Activated naive CD4-positive, alpha-beta T cell treated with anti-CD3 and anti-CD28 coated beads for 36 hours (primary cell): ENCODE measurements at regions of chr11 and their contacts with region 1.

Region 1: GRCh38 chr11:111766093-111766833 is at the start of gene PPP2R1B:
- DNase-seq: peak; percentile 78
- H3K4me3 Mint-ChIP-seq: peak within 1 kb of the TSS; percentile 100
- H3K27ac Mint-ChIP-seq: peak within 1 kb of the TSS; percentile 96
- H3K4me1 Mint-ChIP-seq: peaks cover 33% of the 10 kb centered on the region
- H3K27me3 Mint-ChIP-seq: no peaks in the 10 kb centered on the region
- total RNA-seq, gene PPP2R1B: 36.7 to 43.8 TPM

Region 2: DNA sequence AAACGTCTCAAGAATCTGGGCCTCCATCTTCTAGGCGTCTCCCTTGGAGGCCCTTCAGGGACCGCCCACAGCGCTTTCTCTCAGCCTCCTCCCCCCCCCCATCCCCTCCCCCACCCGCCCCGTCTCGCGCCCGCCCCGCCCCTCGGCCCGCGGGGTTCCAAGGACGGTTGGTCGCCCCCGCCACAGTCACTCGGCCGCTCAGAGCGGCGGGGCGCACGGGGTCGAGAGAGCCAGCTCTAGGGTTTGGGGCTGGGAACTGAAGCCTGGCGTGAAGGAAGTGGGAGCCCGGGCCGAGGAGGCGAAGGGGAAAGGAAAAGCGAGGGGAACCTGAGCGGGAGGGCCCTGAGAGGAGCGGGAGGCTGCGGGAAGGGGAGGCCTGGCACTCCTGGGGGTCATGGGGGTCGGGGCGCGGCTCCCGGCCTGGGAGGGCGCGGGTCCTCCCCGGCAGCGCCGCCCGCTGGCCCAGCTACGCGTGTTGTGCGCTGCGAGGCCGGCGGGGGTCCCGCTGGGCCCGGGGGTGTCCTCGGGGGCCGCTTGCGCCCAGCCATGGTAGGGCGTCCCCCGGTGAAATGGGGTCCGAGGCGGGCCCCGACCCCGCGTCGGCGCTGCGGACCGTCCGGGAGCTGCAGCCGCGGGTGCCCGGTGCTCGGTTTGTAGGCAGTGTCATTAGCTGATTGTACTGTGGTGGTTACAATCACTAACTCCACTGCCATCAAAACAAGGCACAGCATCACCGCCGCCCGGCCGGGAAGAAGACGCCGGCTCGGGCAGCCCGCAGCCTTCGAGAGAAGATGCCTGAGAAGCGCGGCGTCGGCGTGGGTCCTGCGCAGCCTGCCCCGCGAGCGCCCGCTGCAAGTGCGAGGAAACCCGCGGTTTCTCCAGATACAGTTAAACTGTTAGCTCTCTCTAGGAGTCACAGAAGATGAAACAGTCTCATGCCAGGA is 253.7 kb before region 1 on chr11 and contains the start of gene BTG4:
- CTCF ChIA-PET with region 1: no interaction called
- intact Hi-C with region 1: no loop called
- DNase-seq: peak; percentile 48
- H3K4me3 Mint-ChIP-seq: peak within 1 kb of the TSS; percentile 67
- H3K27ac Mint-ChIP-seq: no peak within 1 kb of the TSS
- H3K4me1 Mint-ChIP-seq: peaks cover 22% of the 10 kb centered on the region
- H3K27me3 Mint-ChIP-seq: peaks cover 39% of the 10 kb centered on the region
- total RNA-seq, gene BTG4: not detected

Region 3: DNA sequence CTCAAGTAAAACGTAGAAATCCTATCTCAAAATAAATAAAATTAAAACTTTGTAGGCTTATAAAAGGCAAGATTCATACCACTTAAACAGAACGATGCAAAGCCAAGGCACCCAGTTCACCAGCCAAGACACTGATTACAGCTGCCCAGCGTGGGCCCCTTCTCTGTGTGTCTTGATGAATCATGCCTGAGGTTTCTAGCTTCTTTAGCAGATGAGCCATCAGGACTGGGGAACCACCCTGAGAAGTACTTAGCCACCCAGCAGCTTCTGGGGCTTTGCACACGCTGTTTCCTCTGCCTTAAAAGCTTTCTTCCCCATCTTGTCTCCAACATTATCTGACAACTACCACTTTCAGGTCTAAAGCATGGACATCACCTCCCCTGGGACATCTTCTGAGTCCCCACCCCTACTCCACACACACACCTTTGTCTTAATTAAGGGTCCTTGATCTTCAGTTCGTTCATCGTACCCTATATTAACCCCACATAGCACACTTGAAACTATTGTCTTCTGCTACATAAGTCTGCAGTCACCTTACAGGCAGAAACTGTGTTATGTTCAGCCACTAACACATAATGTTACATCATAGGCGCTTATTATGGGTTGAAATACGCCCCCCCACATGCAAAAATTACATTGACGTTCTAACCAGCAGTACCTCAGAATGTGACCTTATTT is 234.4 kb before region 1 on chr11:
- CTCF ChIA-PET with region 1: interaction called, 3 read pairs
- intact Hi-C with region 1: loop called (anchors 1 kb)
- DNase-seq: peak; percentile 88
- H3K4me3 Mint-ChIP-seq: no peak overlapping the region
- H3K27ac Mint-ChIP-seq: peak overlapping the region; percentile 82
- H3K4me1 Mint-ChIP-seq: peaks cover 47% of the 10 kb centered on the region
- H3K27me3 Mint-ChIP-seq: peaks cover 16% of the 10 kb centered on the region

Region 4: GRCh38 chr11:111841370-111842053 is 75.2 kb after region 1 on chr11:
- CTCF ChIA-PET with region 1: interaction called, 6 read pairs
- intact Hi-C with region 1: loop called (anchors 2 kb)
- DNase-seq: peak; percentile 96
- H3K4me3 Mint-ChIP-seq: no peak overlapping the region
- H3K27ac Mint-ChIP-seq: no peak overlapping the region
- H3K4me1 Mint-ChIP-seq: no peaks in the 10 kb centered on the region
- H3K27me3 Mint-ChIP-seq: no peaks in the 10 kb centered on the region

Region 5: GRCh38 chr11:112024773-112025678 is 258.8 kb after region 1 on chr11 and contains the start of gene DLAT:
- CTCF ChIA-PET with region 1: no interaction called
- intact Hi-C with region 1: loop called (anchors 10 kb)
- DNase-seq: peak; percentile 89
- H3K4me3 Mint-ChIP-seq: peak within 1 kb of the TSS; percentile 100
- H3K27ac Mint-ChIP-seq: peak within 1 kb of the TSS; percentile 100
- H3K4me1 Mint-ChIP-seq: peaks cover 28% of the 10 kb centered on the region
- H3K27me3 Mint-ChIP-seq: no peaks in the 10 kb centered on the region
- total RNA-seq, gene DLAT: 34.2 to 36.8 TPM